PC-3 (cell line): ENCODE measurements at regions of chr5 and their contacts with region 1.

Region 1: DNA sequence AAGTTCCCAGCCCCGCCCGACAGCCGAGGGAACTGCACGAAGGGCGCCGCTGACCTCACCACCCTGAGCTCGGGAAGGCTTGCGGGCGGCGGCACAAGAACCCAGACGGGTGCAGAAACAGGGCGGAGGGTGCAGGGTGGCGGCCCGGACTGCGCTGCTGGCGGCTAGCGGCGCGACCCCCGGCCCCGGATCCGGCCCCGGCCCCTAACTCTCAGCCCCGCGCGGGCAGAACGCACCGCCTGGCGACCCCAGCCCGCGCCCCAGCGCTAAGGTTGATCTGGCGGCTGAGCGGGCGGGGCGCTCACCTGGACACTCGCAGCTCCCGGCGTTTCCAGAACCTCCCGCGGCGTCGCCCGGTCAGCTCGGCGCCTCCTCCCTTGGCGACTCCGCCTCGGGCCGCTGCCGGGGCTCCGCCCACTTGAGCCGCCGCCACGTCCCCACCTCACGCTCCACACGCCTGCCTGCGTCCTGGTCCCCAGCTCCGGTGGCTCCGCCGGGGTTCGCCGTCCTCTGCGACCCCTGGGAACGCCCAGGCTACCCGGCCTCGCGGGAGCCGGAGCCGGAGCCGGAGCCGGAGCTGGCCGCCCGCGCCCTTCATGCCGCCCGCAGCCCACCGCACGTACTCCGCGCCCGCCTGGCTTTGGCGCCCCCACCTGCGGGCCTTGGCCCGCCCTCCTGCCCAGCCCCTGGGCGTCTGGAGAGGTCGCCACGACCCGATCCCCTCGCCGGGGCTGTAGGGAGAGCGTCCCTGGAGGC is at the start of gene P4HA2:
- DNase-seq: peak; percentile 79
- ATAC-seq: peak; percentile 92
- H3K4me3 ChIP-seq: peak within 1 kb of the TSS; percentile 69
- H3K27ac ChIP-seq: peak within 1 kb of the TSS; percentile 30
- H3K4me1 ChIP-seq: peaks cover 20% of the 10 kb centered on the region
- H3K27me3 ChIP-seq: no peaks in the 10 kb centered on the region
- CTCF ChIP-seq: 0 out of 2 replicates have a peak, but pooled peaks have one; percentile 16
- total RNA-seq, gene P4HA2: 38.7 and 43.6 TPM in 2 replicates

Region 2: GRCh38 chr5:132142459-132142858 is 85.2 kb before region 1 on chr5:
- CTCF ChIA-PET with region 1: interaction called, 10 read pairs
- POLR2A ChIA-PET with region 1: no interaction called
- intact Hi-C with region 1: no loop called
- DNase-seq: no peak
- ATAC-seq: no peak
- H3K4me3 ChIP-seq: no peak overlapping the region
- H3K27ac ChIP-seq: no peak overlapping the region
- H3K4me1 ChIP-seq: no peaks in the 10 kb centered on the region
- H3K27me3 ChIP-seq: no peaks in the 10 kb centered on the region
- CTCF ChIP-seq: no peak

Region 3: GRCh38 chr5:132156413-132156812 is 71.2 kb before region 1 on chr5:
- CTCF ChIA-PET with region 1: no interaction called
- POLR2A ChIA-PET with region 1: no interaction called
- intact Hi-C with region 1: no loop called
- DNase-seq: no peak
- ATAC-seq: no peak
- H3K4me3 ChIP-seq: no peak overlapping the region
- H3K27ac ChIP-seq: no peak overlapping the region
- H3K4me1 ChIP-seq: no peaks in the 10 kb centered on the region; the same call in 1 of the 2 replicates
- H3K27me3 ChIP-seq: no peaks in the 10 kb centered on the region
- CTCF ChIP-seq: no peak

Region 4: GRCh38 chr5:132205385-132206125 is 22.1 kb before region 1 on chr5:
- CTCF ChIA-PET with region 1: no interaction called
- POLR2A ChIA-PET with region 1: no interaction called
- intact Hi-C with region 1: no loop called
- DNase-seq: no peak
- ATAC-seq: no peak
- H3K4me3 ChIP-seq: no peak overlapping the region
- H3K27ac ChIP-seq: no peak overlapping the region
- H3K4me1 ChIP-seq: no peaks in the 10 kb centered on the region
- H3K27me3 ChIP-seq: no peaks in the 10 kb centered on the region
- CTCF ChIP-seq: no peak

Region 5: DNA sequence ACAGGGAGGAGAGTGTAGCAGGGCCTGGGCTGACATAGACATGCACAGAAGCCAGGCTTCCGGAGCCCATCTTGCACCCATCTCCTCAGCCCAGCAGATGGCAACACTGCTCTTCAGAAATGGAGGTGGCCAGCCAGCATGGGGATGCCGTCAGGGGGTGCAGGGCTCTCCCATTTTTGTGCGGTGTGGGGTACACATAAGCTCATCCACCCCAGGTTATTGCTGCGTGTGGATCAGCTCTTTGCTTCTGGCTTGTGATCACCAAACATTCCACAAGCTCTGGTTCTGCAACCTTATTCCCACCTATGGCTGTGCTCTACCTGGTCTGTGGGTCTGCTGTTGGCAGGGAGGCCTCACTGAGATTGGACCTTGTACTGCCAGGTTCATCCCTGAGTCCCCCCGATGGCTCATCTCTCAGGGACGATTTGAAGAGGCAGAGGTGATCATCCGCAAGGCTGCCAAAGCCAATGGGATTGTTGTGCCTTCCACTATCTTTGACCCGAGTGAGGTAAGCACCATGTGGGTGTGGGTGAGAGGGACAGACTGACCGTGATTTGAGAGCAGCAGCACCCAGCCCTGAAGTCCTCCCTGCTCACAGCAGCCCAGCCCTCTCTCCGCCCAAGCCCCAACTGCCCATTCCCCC is 159.1 kb after region 1 on chr5:
- CTCF ChIA-PET with region 1: no interaction called
- POLR2A ChIA-PET with region 1: no interaction called
- intact Hi-C with region 1: no loop called
- DNase-seq: peak; percentile 66
- ATAC-seq: peak; percentile 25
- H3K4me3 ChIP-seq: no peak overlapping the region
- H3K27ac ChIP-seq: peak overlapping the region; percentile 99
- H3K4me1 ChIP-seq: peaks cover 52% of the 10 kb centered on the region
- H3K27me3 ChIP-seq: no peaks in the 10 kb centered on the region
- CTCF ChIP-seq: peak; percentile 79

Region 6: GRCh38 chr5:132490486-132491367 is 263.1 kb after region 1 on chr5 and contains the start of gene IRF1:
- CTCF ChIA-PET with region 1: no interaction called
- POLR2A ChIA-PET with region 1: no interaction called
- intact Hi-C with region 1: no loop called
- DNase-seq: peak; percentile 92
- ATAC-seq: peak; percentile 83
- H3K4me3 ChIP-seq: peak within 1 kb of the TSS; percentile 97
- H3K27ac ChIP-seq: peak within 1 kb of the TSS; percentile 55
- H3K4me1 ChIP-seq: peaks cover 37% of the 10 kb centered on the region
- H3K27me3 ChIP-seq: no peaks in the 10 kb centered on the region
- CTCF ChIP-seq: no peak
- total RNA-seq, gene IRF1: 21.1 and 23.1 TPM in 2 replicates